Activated naive CD4-positive, alpha-beta T cell treated with anti-CD3 and anti-CD28 coated beads for 36 hours (primary cell): ENCODE measurements at regions of chr3 and their contacts with region 1.

Region 1: GRCh38 chr3:143119009-143119914 is at the start of gene CHST2:
- DNase-seq: peak; percentile 76
- H3K4me3 Mint-ChIP-seq: peak within 1 kb of the TSS; percentile 84
- H3K27ac Mint-ChIP-seq: no peak within 1 kb of the TSS
- H3K4me1 Mint-ChIP-seq: peaks cover 31% of the 10 kb centered on the region
- H3K27me3 Mint-ChIP-seq: no peaks in the 10 kb centered on the region
- total RNA-seq, gene CHST2: 4.2 to 4.4 TPM

Region 2: GRCh38 chr3:143081844-143082778 is 37.2 kb before region 1 on chr3:
- CTCF ChIA-PET with region 1: no interaction called
- intact Hi-C with region 1: loop called (anchors 1 kb)
- DNase-seq: peak; percentile 51
- H3K4me3 Mint-ChIP-seq: peak overlapping the region; percentile 41
- H3K27ac Mint-ChIP-seq: peak overlapping the region; percentile 86
- H3K4me1 Mint-ChIP-seq: peaks cover 23% of the 10 kb centered on the region
- H3K27me3 Mint-ChIP-seq: no peaks in the 10 kb centered on the region

Region 3: DNA sequence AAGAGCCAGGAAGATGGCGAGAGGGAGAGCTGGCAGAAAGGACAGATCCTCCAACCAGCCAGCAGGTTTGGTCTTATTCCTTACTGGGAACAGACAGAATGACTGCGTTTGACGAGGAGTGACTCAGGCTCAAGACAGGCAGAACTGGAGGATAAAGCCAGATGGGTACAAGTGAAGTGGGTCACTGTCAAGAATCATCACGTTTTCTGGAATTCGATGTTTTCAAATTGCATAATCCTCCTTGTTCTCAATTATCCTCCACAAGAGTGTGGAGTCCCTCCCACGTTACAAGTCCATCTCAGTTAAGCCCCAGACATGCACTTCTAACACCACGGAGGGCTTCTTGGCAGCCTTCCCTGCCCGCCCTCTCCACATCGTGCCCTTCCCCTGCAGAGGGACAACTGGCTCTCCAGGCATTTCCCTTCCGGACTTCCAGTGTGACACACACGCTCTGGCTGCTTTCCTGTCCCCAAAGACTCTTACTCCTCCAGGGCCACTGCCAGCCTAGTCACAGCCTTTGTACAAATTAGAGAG is 183.4 kb after region 1 on chr3:
- CTCF ChIA-PET with region 1: interaction called, 3 read pairs
- intact Hi-C with region 1: loop called (anchors 1 kb)
- DNase-seq: no peak
- H3K4me3 Mint-ChIP-seq: no peak overlapping the region
- H3K27ac Mint-ChIP-seq: no peak overlapping the region
- H3K4me1 Mint-ChIP-seq: peaks cover 8% of the 10 kb centered on the region
- H3K27me3 Mint-ChIP-seq: no peaks in the 10 kb centered on the region

Region 4: GRCh38 chr3:143433787-143434378 is 314.6 kb after region 1 on chr3:
- CTCF ChIA-PET with region 1: interaction called, 3 read pairs
- intact Hi-C with region 1: loop called (anchors 5 kb)
- DNase-seq: peak; percentile 64
- H3K4me3 Mint-ChIP-seq: no peak overlapping the region
- H3K27ac Mint-ChIP-seq: no peak overlapping the region
- H3K4me1 Mint-ChIP-seq: no peaks in the 10 kb centered on the region
- H3K27me3 Mint-ChIP-seq: no peaks in the 10 kb centered on the region

Region 5: GRCh38 chr3:143674100-143674968 is 555.1 kb after region 1 on chr3:
- CTCF ChIA-PET with region 1: interaction called, 16 read pairs
- intact Hi-C with region 1: loop called (anchors 1 kb)
- DNase-seq: peak; percentile 89
- H3K4me3 Mint-ChIP-seq: peak overlapping the region; percentile 46
- H3K27ac Mint-ChIP-seq: no peak overlapping the region
- H3K4me1 Mint-ChIP-seq: peaks cover 10% of the 10 kb centered on the region
- H3K27me3 Mint-ChIP-seq: no peaks in the 10 kb centered on the region